Activated CD8-positive, alpha-beta T cell treated with anti-CD3 and anti-CD28 coated beads for 36 hours (primary cell): ENCODE measurements at regions of chr19 and their contacts with region 1.

Region 1: DNA sequence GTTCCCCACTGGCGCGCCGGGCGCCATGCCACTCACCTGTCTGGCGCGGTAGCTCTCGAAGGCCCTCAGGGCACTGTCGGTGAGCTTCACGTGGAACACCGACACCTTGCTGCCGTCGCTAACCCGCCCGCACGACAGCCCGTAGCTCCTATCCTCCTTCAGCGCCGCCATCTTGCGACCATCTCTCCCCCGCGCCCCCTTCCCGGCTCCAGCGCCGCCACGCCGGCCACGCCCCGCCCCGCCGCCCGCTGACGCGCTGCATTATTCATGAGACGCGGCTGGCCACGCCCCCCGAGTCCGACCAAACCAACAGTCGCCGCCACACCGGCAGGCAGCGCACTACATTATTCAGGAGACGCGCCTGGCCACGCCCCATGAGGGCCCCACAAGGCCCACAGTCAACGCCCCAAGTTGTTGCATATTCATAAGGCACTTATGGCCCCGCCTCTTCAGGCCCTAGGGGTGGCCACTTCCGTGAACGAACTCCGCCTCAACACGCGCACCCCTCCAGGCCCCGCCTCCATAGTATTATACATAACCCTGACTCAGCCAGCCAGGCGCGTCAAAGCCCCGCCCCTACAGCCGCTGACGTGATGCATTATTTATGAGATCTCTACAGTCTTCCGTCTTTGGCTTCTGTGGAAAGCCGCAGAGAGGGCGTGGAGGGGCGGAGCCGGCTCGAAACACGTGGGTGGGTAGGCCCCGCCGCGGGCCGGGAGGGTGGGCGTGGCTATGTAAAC is at the start of gene ELL:
- DNase-seq: peak; percentile 100
- ATAC-seq: peak; percentile 93
- H3K4me3 Mint-ChIP-seq: peak within 1 kb of the TSS; percentile 76
- H3K27ac Mint-ChIP-seq: peak within 1 kb of the TSS; percentile 94
- H3K4me1 Mint-ChIP-seq: peaks cover 9% of the 10 kb centered on the region
- H3K27me3 Mint-ChIP-seq: no peaks in the 10 kb centered on the region
- CTCF ChIP-seq: no peak
- total RNA-seq, gene ELL: 20.1 to 21.9 TPM

Region 2: GRCh38 chr19:18469069-18469846 is 52.8 kb before region 1 on chr19:
- CTCF ChIA-PET with region 1: interaction called, 32 read pairs
- POLR2A ChIA-PET with region 1: interaction called, 6 read pairs
- intact Hi-C with region 1: no loop called
- DNase-seq: peak; percentile 77
- ATAC-seq: peak; percentile 56
- H3K4me3 Mint-ChIP-seq: no peak overlapping the region
- H3K27ac Mint-ChIP-seq: no peak overlapping the region
- H3K4me1 Mint-ChIP-seq: peaks cover 28% of the 10 kb centered on the region
- H3K27me3 Mint-ChIP-seq: no peaks in the 10 kb centered on the region
- CTCF ChIP-seq: no peak

Region 3: DNA sequence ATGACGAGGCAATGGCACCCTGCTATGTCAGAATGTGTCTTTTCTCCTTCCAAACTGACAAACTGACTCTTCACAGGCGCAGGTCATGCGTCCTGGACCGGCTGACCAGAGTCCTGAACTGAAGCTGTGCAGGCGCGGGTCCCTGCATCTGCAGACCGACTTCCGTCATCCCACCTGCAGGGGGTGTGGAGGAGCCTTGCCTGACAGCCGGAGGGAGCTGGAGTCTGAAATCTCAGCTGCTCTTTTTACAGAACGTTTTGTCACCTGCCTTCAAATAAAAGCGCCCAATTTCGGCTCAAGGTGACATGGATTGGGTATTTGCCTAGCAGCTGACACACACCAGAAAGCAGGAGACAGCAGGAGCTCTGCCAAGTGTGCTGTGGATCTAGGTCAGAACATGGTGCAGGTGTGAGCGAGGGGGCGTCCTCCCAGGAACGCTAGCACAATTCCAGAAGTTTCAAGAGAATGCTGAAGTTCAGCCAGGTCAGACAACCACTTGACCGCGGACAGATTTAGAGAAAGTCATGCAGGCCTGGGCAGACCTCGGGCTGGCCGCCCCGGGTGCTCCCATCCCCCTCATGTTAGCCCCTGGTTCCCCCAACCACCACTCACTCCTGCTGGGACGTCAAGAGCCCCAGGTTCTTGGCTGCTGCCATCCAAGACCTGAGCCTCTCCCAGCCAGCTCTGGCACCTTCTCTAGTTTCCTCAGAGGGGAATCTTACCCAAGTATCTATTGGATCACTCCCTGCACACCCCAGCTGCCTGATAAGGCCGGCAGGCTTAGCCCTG is 33.0 kb before region 1 on chr19:
- CTCF ChIA-PET with region 1: interaction called, 12 read pairs
- POLR2A ChIA-PET with region 1: interaction called, 3 read pairs
- intact Hi-C with region 1: no loop called
- DNase-seq: no peak
- ATAC-seq: no peak
- H3K4me3 Mint-ChIP-seq: no peak overlapping the region
- H3K27ac Mint-ChIP-seq: no peak overlapping the region
- H3K4me1 Mint-ChIP-seq: peaks cover 49% of the 10 kb centered on the region
- H3K27me3 Mint-ChIP-seq: no peaks in the 10 kb centered on the region
- CTCF ChIP-seq: no peak

Region 4: DNA sequence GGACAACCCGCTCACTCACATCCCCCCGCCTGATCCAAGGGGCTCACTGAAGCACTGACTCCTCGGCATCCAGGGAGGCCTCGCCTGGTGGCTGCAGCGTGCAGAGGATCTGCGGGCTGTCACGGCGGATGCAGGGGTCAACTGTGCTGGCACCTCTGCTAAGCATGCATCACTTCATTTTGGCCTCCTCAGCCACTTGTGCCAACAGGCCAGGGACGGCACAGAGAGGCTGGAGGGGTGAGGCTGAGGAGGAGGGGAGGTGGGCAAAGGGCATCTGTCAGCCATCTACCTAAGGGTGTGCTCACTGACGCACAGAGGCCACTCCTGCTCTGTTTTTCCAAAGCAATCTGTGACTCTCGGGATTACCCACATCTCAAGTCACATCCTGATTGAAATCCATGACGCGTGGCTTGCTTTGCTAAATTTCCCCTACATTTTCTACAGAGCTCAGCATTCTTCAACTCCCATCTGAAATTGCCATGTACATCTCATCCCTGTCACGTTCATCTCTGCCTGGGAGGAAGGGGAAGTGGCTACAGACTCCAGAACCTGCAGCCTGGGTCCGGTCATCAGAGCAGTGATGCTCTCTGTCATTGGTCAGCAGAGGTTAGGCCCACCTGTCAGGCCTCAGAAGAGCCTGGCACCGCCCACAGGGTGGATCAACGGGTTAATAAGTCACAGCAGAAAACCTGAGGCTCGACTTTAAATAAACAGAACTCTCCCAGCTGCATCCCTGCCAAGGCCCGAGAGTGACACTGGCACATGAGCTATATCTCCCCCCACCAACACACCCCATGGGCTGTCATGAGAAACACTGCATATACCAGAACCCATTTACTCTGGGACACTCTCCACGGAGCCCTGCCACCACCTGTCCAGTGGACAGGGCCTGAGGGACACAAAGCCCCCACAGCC is 17.8 kb before region 1 on chr19:
- CTCF ChIA-PET with region 1: interaction called, 97 read pairs
- POLR2A ChIA-PET with region 1: interaction called, 11 read pairs
- intact Hi-C with region 1: no loop called
- DNase-seq: no peak
- ATAC-seq: no peak
- H3K4me3 Mint-ChIP-seq: no peak overlapping the region
- H3K27ac Mint-ChIP-seq: peak overlapping the region; percentile 36
- H3K4me1 Mint-ChIP-seq: peaks cover 91% of the 10 kb centered on the region
- H3K27me3 Mint-ChIP-seq: no peaks in the 10 kb centered on the region
- CTCF ChIP-seq: no peak

Region 5: GRCh38 chr19:18571564-18572300 is 49.7 kb after region 1 on chr19 and contains the start of gene UBA52:
- CTCF ChIA-PET with region 1: interaction called, 15 read pairs
- POLR2A ChIA-PET with region 1: interaction called, 20 read pairs
- intact Hi-C with region 1: loop called (anchors 5 kb)
- DNase-seq: peak; percentile 99
- ATAC-seq: peak; percentile 92
- H3K4me3 Mint-ChIP-seq: peak within 1 kb of the TSS; percentile 87
- H3K27ac Mint-ChIP-seq: peak within 1 kb of the TSS; percentile 91
- H3K4me1 Mint-ChIP-seq: peaks cover 29% of the 10 kb centered on the region
- H3K27me3 Mint-ChIP-seq: no peaks in the 10 kb centered on the region
- CTCF ChIP-seq: no peak
- total RNA-seq, gene UBA52: 1,795 to 1,837 TPM

Region 6: DNA sequence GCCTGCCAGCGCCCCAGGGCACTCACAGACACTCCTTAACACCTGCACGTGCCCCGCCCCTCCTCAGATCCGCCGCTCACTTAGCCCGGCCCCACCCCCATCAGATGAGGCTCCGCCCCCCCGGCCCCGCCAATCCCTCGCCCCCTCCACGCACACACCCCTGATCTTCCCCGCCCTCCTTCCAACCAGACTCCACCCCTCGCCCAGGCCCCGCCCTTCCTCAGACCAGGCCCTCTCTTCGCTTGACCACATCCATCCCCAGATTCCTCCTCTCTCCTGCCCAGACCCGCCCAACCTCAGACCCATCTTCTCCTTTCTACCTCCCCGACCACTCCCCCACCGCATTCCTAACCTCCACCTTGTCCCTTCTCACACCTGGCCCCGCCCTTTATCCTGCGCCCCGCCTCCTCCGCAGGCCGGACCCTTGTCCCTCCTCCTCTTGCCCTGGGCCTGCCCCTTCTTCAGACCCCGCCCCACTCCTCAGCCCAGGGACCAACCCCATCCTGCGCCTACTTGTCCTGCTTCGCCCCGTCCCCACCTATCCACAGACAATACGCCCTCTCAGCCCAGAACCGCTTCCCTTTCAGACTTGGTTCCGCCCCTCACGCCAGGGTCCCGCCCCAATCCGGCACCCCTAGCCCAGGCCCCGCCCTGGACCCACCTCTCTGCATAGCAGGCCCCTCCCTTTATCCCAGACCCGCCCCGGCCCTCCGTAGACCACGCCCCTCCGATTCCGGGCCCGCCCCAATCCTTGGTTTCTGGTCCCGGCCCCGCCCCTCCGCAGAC is 114.3 kb after region 1 on chr19:
- CTCF ChIA-PET with region 1: interaction called, 3 read pairs
- POLR2A ChIA-PET with region 1: no interaction called
- intact Hi-C with region 1: loop called (anchors 5 kb)
- DNase-seq: peak; percentile 99
- ATAC-seq: peak; percentile 92
- H3K4me3 Mint-ChIP-seq: peak overlapping the region; percentile 87
- H3K27ac Mint-ChIP-seq: peak overlapping the region; percentile 75
- H3K4me1 Mint-ChIP-seq: peaks cover 13% of the 10 kb centered on the region
- H3K27me3 Mint-ChIP-seq: no peaks in the 10 kb centered on the region
- CTCF ChIP-seq: no peak